ENCODE measurements at regions of chr12 and their contacts with region 1.

Region 1: GRCh38 chr12:31245822-31246469 is 80.0 kb downstream of the SINHCAF start:
- DNase-seq: no peak
- H3K4me3 ChIP-seq: no peak overlapping the region
- CTCF ChIP-seq: no peak

Region 2: DNA sequence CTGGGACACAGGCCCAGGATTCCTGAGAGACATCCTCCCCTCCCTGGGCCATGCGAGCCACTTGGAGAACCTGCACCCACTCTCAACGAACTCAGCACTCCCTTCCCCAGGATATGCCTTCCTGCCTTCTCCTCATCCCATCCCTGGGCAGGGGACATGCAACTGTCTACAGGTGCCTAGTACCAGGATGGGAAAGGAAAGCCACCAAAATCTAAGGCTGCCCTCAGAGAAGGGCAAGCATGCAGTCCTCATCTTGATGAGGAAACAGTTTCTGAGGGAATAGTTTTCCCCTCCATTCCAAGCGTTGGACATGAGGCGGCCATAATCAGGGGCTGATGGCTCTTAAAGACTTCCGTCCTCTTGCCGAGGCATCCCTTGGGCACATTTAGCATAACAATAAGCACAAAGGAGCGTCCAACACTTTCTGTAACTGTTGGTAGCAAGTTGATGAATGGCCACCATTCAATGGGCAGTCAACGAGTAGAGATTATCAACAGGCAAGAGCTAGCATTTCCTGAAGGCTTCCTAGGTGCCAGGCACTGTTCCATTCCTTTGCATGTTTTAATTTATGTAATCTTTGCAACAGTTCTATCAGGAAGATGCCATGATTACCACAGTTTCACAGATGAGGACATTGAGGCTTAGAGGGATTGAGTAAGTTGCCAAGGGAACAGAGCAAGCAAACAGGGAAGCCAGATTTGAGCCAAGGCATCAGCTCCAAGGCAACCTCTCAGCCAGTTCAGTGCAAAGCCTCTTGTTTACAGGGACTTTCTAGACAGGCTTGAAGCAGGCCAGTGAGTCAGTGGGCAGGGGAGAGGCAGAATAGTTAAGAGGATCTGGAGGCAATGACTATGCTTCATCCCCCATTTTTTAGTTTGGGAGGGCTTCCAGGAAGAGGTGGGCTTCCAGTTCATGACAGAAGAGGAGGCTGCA is 25.0 kb before region 1 on chr12:
- CTCF ChIA-PET with region 1: no interaction called
- POLR2A ChIA-PET with region 1: no interaction called
- DNase-seq: no peak
- H3K4me3 ChIP-seq: no peak overlapping the region
- CTCF ChIP-seq: no peak

Region 3: DNA sequence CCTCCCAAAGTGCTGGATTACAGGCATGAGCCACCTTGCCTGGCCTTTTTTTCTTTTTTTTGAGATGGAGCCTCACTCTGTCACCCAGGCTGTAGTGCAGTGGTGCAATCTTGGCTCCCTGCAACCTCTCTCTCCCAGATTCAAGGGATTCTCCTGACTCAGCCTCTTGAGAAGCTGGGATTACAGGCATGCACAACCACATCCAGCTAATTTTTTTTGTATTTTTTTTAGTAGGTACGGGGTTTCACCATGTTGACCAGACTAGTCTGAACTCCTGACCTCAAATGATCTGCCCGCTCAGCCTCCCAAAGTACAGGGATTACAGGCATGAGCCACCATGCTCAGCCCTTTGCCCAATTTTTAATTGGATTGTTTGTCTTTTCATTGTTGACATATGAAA is 22.0 kb after region 1 on chr12:
- CTCF ChIA-PET with region 1: interaction called, 71 read pairs
- POLR2A ChIA-PET with region 1: no interaction called
- DNase-seq: no peak
- H3K4me3 ChIP-seq: no peak overlapping the region
- CTCF ChIP-seq: no peak

Region 4: DNA sequence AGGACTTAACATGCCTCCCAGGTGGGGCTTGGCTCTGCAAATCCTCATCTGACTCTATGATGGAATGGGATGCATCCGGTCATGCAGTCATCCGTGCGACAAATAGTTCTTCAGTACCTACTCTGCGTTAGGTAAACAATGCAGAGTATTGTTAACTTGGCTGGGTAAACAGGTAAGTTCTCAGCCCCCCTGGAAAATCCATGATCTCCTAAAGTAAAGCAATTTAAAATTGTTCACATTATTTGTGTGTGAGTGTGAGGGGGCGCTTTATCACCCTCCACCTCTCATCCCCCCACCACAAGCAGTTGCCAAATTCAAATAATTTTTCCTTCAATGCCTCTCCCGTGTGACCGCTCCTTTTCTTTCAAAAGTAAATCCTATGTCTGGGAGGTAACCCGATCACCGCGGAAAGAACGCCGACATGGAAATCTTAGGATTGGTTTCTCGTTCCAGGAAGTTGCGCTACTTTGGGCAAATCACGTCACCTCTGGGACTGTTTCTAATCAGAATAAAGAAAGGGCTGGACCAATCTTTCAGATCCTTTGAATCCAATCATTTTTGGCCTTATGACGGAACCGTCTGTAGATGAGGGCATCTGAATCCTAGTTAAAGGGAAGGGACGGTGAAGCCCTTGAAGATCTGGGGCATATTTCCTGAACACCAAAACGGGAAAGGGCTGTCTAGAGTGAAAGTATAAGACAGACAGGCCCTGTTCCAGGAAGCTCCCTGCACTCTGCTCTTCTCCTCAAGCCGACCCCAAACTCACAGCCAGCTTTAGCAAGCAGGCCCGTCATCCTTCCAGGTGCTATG is 124.0 kb after region 1 on chr12:
- CTCF ChIA-PET with region 1: no interaction called
- POLR2A ChIA-PET with region 1: no interaction called
- DNase-seq: peak; percentile 5
- H3K4me3 ChIP-seq: peak overlapping the region; percentile 16
- CTCF ChIP-seq: no peak

Measured in AG04449 (cell line).